GM12878 (cell line): ENCODE measurements at regions of chr4 and their contacts with region 1.

Region 1: GRCh38 chr4:114807759-114808404 is 209.3 kb downstream of the UGT8 start:
- DNase-seq: no peak
- ATAC-seq: peak; percentile 100
- H3K4me3 ChIP-seq: no peak overlapping the region
- H3K27ac ChIP-seq: no peak overlapping the region
- H3K4me1 ChIP-seq: no peaks in the 10 kb centered on the region
- H3K27me3 ChIP-seq: no peaks in the 10 kb centered on the region
- CTCF ChIP-seq: peak; percentile 89 to 98 (median 98)
- EP300 ChIP-seq: no peak
- POLR2A ChIP-seq: no peak
- RAD21 ChIP-seq: peak; percentile 64

Region 2: GRCh38 chr4:114386637-114387233 is 421.1 kb before region 1 on chr4:
- CTCF ChIA-PET with region 1: interaction called, 3 read pairs
- POLR2A ChIA-PET with region 1: no interaction called
- RAD21 ChIA-PET with region 1: interaction called, 5 read pairs
- SMC1A ChIA-PET with region 1: interaction called, 9 read pairs
- in situ Hi-C with region 1: no loop called
- intact Hi-C with region 1: loop called (anchors 5 kb)
- DNase-seq: peak; percentile 5
- ATAC-seq: peak; percentile 67
- H3K4me3 ChIP-seq: no peak overlapping the region
- H3K27ac ChIP-seq: no peak overlapping the region
- H3K4me1 ChIP-seq: no peaks in the 10 kb centered on the region
- H3K27me3 ChIP-seq: no peaks in the 10 kb centered on the region
- CTCF ChIP-seq: peak; percentile 49 to 76 (median 53)
- EP300 ChIP-seq: no peak
- POLR2A ChIP-seq: no peak
- RAD21 ChIP-seq: peak; percentile 92

Region 3: GRCh38 chr4:114791976-114792375 is 15.9 kb before region 1 on chr4:
- CTCF ChIA-PET with region 1: interaction called, 36 read pairs
- POLR2A ChIA-PET with region 1: no interaction called
- RAD21 ChIA-PET with region 1: no interaction called
- SMC1A ChIA-PET with region 1: interaction called, 7 read pairs
- in situ Hi-C with region 1: no loop called
- intact Hi-C with region 1: no loop called
- DNase-seq: no peak
- ATAC-seq: no peak
- H3K4me3 ChIP-seq: no peak overlapping the region
- H3K27ac ChIP-seq: no peak overlapping the region
- H3K4me1 ChIP-seq: no peaks in the 10 kb centered on the region
- H3K27me3 ChIP-seq: no peaks in the 10 kb centered on the region
- CTCF ChIP-seq: no peak
- EP300 ChIP-seq: no peak
- POLR2A ChIP-seq: no peak
- RAD21 ChIP-seq: no peak

Region 4: GRCh38 chr4:114827651-114828050 is 19.8 kb after region 1 on chr4:
- CTCF ChIA-PET with region 1: interaction called, 15 read pairs
- POLR2A ChIA-PET with region 1: no interaction called
- RAD21 ChIA-PET with region 1: interaction called, 3 read pairs
- SMC1A ChIA-PET with region 1: interaction called, 3 read pairs
- in situ Hi-C with region 1: no loop called
- intact Hi-C with region 1: no loop called
- DNase-seq: no peak
- ATAC-seq: 0 out of 3 replicates have a peak, but pooled peaks have one; percentile 25
- H3K4me3 ChIP-seq: no peak overlapping the region
- H3K27ac ChIP-seq: no peak overlapping the region
- H3K4me1 ChIP-seq: no peaks in the 10 kb centered on the region
- H3K27me3 ChIP-seq: no peaks in the 10 kb centered on the region
- CTCF ChIP-seq: no peak
- EP300 ChIP-seq: no peak
- POLR2A ChIP-seq: no peak
- RAD21 ChIP-seq: no peak

Region 5: DNA sequence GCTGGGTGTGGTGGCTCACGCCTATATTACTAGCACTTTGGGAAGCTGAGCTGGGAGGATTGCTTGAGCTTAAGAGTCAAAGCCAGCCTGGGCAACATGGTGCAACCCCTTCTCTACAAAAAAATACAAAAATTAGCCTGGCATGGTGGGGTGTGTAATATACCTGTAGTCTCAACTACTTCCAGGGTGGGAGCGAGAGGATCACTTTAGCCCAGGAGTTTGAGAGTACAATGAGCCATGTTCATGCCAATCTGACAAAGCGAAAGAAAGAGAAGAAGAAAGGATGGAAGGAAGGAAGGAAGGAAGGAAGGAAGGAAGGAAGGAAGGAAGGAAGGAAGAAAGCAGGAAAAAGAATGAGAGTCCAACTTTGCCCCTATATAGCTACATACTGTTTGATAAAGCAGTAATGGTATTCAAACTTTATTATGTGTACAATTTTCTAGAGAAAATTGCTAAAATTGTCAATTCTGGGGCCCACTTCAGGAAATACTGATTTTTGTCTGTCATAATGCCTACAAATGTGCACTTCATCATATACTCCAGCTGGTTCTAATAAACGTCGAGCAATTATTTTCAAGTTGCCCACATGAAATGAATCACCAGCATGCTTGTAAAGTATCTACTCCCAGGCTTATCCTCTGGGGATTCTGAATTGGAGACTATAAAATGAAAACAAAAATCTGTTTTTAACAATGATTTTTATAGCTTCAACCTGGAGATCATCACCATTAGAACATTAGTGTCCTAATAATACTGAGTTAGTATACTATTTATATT is 173.2 kb after region 1 on chr4:
- CTCF ChIA-PET with region 1: no interaction called
- POLR2A ChIA-PET with region 1: no interaction called
- RAD21 ChIA-PET with region 1: no interaction called
- SMC1A ChIA-PET with region 1: no interaction called
- in situ Hi-C with region 1: no loop called
- intact Hi-C with region 1: no loop called
- DNase-seq: no peak
- ATAC-seq: no peak
- H3K4me3 ChIP-seq: no peak overlapping the region
- H3K27ac ChIP-seq: no peak overlapping the region
- H3K4me1 ChIP-seq: no peaks in the 10 kb centered on the region
- H3K27me3 ChIP-seq: no peaks in the 10 kb centered on the region
- CTCF ChIP-seq: no peak
- EP300 ChIP-seq: no peak
- POLR2A ChIP-seq: no peak
- RAD21 ChIP-seq: no peak

Region 6: GRCh38 chr4:115082633-115083032 is 274.8 kb after region 1 on chr4:
- CTCF ChIA-PET with region 1: no interaction called
- POLR2A ChIA-PET with region 1: no interaction called
- RAD21 ChIA-PET with region 1: no interaction called
- SMC1A ChIA-PET with region 1: no interaction called
- in situ Hi-C with region 1: no loop called
- intact Hi-C with region 1: no loop called
- DNase-seq: no peak
- ATAC-seq: no peak
- H3K4me3 ChIP-seq: no peak overlapping the region
- H3K27ac ChIP-seq: no peak overlapping the region
- H3K4me1 ChIP-seq: no peaks in the 10 kb centered on the region
- H3K27me3 ChIP-seq: no peaks in the 10 kb centered on the region
- CTCF ChIP-seq: no peak
- EP300 ChIP-seq: no peak
- POLR2A ChIP-seq: no peak
- RAD21 ChIP-seq: no peak